Dendritic cell treated with granulocyte-macrophage colony-stimulating factor and Interleukin-4, amounts not matched to agents 40 ng/mL and 50 ng/mL, for 4 days (primary cell): ENCODE measurements at regions of chr5 and their contacts with region 1.

Region 1: GRCh38 chr5:147391781-147392180 is 118.1 kb downstream of the DPYSL3 start:
- H3K4me3 Mint-ChIP-seq: no peak overlapping the region
- H3K27ac Mint-ChIP-seq: no peak overlapping the region
- H3K4me1 Mint-ChIP-seq: no peaks in the 10 kb centered on the region
- H3K27me3 Mint-ChIP-seq: no peaks in the 10 kb centered on the region

Region 2: DNA sequence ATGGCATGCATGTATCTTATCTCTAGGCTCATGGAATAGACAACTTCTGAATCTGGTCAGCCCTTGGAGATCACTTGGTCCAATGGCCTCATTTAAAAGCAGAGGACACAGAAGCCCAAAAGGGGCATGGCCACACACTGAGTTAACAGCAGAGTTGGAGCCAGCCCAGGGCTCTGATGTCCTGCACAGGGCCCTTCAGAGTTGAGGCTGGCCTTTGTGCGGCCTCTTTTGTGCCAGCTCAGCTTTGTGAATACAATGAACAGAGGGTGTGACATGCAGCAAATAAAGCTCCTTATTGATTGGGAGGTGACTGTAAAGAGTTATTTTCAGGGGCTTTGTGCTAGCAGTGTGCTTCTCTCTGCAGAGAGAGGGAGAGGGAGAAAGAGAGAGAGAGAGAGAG is 307.1 kb before region 1 on chr5:
- intact Hi-C with region 1: no loop called
- H3K4me3 Mint-ChIP-seq: no peak overlapping the region
- H3K27ac Mint-ChIP-seq: no peak overlapping the region
- H3K4me1 Mint-ChIP-seq: no peaks in the 10 kb centered on the region
- H3K27me3 Mint-ChIP-seq: no peaks in the 10 kb centered on the region

Region 3: DNA sequence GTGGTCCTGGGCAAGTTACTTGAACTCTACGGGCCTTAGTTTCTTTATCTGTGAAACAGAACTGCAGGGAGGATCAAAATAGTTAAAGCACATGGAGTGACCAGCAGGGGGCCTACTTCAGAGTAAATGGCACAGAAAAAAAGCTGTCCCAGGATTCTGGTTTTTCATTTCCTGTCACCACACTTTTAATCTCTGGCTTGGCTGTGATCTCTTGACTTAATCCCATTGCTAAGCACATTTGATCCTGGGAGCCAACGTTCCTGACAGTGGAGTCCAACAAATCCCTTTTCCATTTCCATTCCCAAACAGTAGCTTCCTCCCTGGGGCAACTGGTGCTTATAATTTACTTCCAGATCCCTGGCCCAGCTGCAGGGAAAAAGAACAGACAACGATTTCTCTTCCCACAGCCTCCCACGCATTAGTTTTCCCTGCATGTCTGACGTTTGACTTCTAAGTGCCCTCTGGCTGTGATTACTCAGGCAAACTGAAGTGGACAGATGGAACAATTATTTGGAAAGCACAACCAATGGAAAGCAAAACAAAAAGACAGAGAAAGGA is 293.5 kb before region 1 on chr5:
- intact Hi-C with region 1: loop called (anchors 2 kb)
- H3K4me3 Mint-ChIP-seq: no peak overlapping the region
- H3K27ac Mint-ChIP-seq: no peak overlapping the region
- H3K4me1 Mint-ChIP-seq: no peaks in the 10 kb centered on the region
- H3K27me3 Mint-ChIP-seq: no peaks in the 10 kb centered on the region

Region 4: GRCh38 chr5:147673266-147673665 is 281.5 kb after region 1 on chr5:
- intact Hi-C with region 1: no loop called
- H3K4me3 Mint-ChIP-seq: no peak overlapping the region
- H3K27ac Mint-ChIP-seq: no peak overlapping the region
- H3K4me1 Mint-ChIP-seq: no peaks in the 10 kb centered on the region
- H3K27me3 Mint-ChIP-seq: no peaks in the 10 kb centered on the region